ENCODE measurements at regions of chr5 and their contacts with region 1.

Region 1: GRCh38 chr5:100430268-100431195 is 104.6 kb upstream of the FAM174A start:
- DNase-seq: peak; percentile 37
- H3K4me3 ChIP-seq: no peak overlapping the region; a peak in 1 of 4 replicates
- H3K27ac ChIP-seq: no peak overlapping the region
- H3K4me1 ChIP-seq: no peaks in the 10 kb centered on the region
- H3K27me3 ChIP-seq: no peaks in the 10 kb centered on the region
- CTCF ChIP-seq: peak; percentile 91
- EP300 ChIP-seq: no peak
- RAD21 ChIP-seq: peak; percentile 79

Region 2: GRCh38 chr5:100448111-100448528 is 17.6 kb after region 1 on chr5:
- CTCF ChIA-PET with region 1: interaction called, 18 read pairs
- POLR2A ChIA-PET with region 1: no interaction called
- DNase-seq: no peak
- H3K4me3 ChIP-seq: no peak overlapping the region
- H3K27ac ChIP-seq: no peak overlapping the region
- H3K4me1 ChIP-seq: no peaks in the 10 kb centered on the region; a peak in 2 of 4 replicates
- H3K27me3 ChIP-seq: no peaks in the 10 kb centered on the region
- CTCF ChIP-seq: no peak
- EP300 ChIP-seq: no peak
- RAD21 ChIP-seq: no peak

Region 3: DNA sequence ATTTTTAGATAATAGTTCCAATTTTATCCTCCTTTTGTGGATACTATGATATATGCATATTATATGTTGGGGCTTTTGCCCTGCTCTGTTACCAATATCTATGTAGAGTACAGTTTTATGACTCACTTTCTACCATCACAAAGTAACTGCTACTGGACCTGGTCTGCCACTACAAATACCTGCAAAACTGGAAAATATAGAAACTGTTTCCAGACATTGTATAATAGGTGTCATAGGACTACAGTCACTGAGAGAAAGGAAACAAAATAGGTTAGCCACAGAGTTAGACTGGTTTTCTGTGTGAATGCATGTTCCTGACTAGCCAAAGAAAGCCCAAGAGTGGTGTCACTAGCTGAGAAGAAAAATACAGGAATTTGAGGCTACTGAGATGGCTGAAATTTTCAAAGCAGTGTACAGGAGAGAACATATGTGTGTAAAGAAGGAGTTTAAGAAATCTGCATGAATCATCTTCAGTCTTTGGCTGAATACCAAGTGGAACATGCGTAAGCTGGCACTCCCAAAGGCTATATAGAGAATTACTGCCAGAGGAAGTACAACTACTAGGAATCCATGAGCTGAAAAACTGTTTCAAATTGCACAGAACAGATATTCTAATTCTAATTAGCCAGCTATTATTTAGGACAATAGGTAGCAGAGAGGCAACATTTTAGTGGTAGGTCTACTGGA is 75.6 kb after region 1 on chr5:
- CTCF ChIA-PET with region 1: no interaction called
- POLR2A ChIA-PET with region 1: no interaction called
- DNase-seq: no peak
- H3K4me3 ChIP-seq: no peak overlapping the region
- H3K27ac ChIP-seq: no peak overlapping the region
- H3K4me1 ChIP-seq: no peaks in the 10 kb centered on the region
- H3K27me3 ChIP-seq: no peaks in the 10 kb centered on the region
- CTCF ChIP-seq: 0 out of 2 replicates have a peak, but pooled peaks have one; percentile 26
- EP300 ChIP-seq: no peak
- RAD21 ChIP-seq: no peak

Measured in SK-N-SH (cell line).